Prostate gland (tissue), 2 donors: ENCODE measurements at regions of chr1 and their contacts with region 1.

Region 1: DNA sequence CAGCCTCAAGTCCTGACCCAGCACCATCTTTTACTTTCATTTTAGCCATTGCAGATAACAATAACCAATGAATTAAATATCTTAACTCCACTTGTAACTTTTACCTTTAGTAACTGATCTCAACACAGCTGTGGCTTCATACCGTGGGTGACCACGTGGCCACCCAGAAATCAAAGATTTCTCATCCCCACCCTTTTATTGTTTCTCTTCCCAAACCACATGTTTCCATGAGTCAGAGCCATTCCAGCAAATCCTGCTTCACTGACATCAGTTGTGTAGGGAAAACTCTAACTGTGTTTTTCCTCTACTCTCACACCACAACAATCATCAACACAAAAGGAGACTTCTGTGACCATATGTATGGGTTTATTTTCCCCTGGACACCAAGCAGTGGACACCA is 25.1 kb upstream of the BRDT start:
- DNase-seq: no peak
- H3K4me3 ChIP-seq: no peak overlapping the region
- H3K27ac ChIP-seq: no peak overlapping the region
- H3K4me1 ChIP-seq: no peaks in the 10 kb centered on the region
- H3K27me3 ChIP-seq: no peaks in the 10 kb centered on the region
- CTCF ChIP-seq: no peak
- POLR2A ChIP-seq: no peak

Region 2: GRCh38 chr1:91529856-91530255 is 394.3 kb before region 1 on chr1:
- intact Hi-C with region 1: no loop called
- DNase-seq: no peak
- H3K4me3 ChIP-seq: no peak overlapping the region
- H3K27ac ChIP-seq: no peak overlapping the region
- H3K4me1 ChIP-seq: no peaks in the 10 kb centered on the region
- H3K27me3 ChIP-seq: no peaks in the 10 kb centered on the region
- CTCF ChIP-seq: peak in 1 of 4 experiments; percentile 42
- POLR2A ChIP-seq: no peak

Region 3: GRCh38 chr1:92298573-92299476 is 374.7 kb after region 1 on chr1 and contains the starts of genes GLMN and RPAP2:
- intact Hi-C with region 1: loop called (anchors 10 kb)
- DNase-seq: peak; percentile 76
- H3K4me3 ChIP-seq: peak within 1 kb of the TSS; percentile 59 to 84
- H3K27ac ChIP-seq: peak within 1 kb of the TSS; percentile 89 to 97
- H3K4me1 ChIP-seq: no peaks in the 10 kb centered on the region
- H3K27me3 ChIP-seq: no peaks in the 10 kb centered on the region
- CTCF ChIP-seq: no peak
- POLR2A ChIP-seq: peak; percentile 89
- total RNA-seq, gene GLMN: 4.7 to 9.5 TPM
- total RNA-seq, gene RPAP2: 6.5 to 11.0 TPM